Posterior cingulate gyrus (tissue), 11 donors: ENCODE measurements at regions of chr11 and their contacts with region 1.

Region 1: GRCh38 chr11:61446211-61446651 is 16.3 kb downstream of the SDHAF2 start:
- DNase-seq: peak; percentile 87 to 99 (median 94)

Region 2: GRCh38 chr11:61516675-61517572 is 70.7 kb after region 1 on chr11:
- intact Hi-C with region 1: loop called (anchors 1 kb)
- DNase-seq: peak in 6 of 10 donors; percentile 42 to 90 (median 60)

Region 3: DNA sequence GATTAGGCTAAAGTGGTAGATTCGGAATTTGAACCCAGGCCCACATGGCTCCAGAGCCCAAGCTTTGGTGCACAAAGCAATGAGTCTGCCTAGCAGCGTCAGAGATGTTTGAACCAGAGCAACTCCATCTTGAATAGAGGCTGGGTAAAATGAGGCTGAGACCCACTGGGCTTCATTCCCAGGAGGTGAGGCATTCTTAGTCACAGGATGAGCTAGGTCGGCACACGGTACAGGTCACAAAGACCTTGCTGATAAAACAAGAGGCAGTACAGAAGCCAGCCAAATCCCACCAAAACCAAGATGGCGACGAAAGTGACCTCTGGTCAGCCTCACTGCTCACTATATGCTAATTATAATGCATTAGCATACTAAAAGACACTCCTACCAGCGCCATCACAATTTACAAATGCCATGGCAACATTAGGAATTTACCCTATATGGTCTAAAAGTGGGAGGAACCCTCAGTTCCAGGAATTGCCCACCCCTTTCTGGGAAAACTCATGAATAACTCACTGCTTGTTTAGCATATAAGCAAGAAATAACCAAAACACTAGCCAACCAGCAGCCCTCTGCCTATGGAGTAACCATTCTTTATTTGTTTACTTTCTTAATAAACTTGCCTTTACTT is 193.7 kb after region 1 on chr11:
- intact Hi-C with region 1: loop called (anchors 1 kb)
- DNase-seq: no peak